ENCODE measurements at regions of chr16 and their contacts with region 1.

Region 1: DNA sequence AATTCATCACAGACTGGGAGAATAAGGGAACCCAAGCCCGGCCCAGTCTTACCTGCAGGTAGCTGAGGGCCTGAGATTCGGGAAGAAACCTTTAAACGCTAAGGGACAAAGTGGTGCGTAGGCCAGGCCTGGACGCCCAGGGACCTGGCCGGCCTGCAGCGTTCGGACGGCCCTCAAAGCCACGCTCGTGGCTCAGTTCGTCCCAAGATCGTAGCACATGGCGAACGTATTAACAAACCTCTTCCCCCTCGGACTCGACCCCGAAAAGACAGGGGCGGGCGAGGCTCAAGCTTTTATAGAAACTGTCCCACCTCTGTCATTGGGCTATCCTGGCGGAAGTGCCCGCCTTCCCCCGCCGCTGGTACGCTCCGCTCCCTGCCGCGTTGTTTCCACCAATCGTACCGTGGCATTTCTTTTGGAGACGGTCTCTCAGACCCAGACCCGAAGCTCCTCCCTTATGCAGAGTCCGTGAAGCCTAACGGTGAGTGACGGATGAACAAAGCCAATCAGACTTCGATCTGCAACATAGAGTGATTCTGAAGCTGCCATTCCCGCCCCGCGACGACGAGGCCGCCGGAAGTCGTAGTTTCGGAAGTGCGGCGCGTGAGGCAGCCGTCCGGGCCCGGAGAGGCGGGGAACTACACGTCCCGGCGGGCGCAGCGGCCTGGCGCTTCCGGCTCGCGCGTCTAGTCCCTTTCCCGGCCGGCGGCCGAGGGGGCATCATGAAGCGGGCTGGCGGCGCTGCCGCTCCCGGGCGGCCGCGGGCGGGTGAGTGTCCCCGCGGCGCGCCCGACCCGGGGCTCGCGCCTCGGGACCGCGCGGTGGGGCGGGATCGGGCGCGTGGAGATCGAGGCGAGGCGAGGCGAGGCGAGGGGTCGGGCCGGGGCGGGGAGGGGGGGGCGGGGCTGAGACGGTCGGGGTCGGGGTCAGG is at the start of gene TRAF7:
- DNase-seq: peak; percentile 97 to 100 (median 99)
- H3K4me3 ChIP-seq: peak within 1 kb of the TSS; percentile 75 to 79
- H3K4me3 Mint-ChIP-seq: peak within 1 kb of the TSS; percentile 94 to 98 (median 95)
- H3K27ac ChIP-seq: peak within 1 kb of the TSS; percentile 83
- H3K27ac Mint-ChIP-seq: peak within 1 kb of the TSS; percentile 75 to 98 (median 94)
- H3K4me1 ChIP-seq: peaks cover 70% of the 10 kb centered on the region
- H3K4me1 Mint-ChIP-seq: peaks cover 30 to 63% (median 45%) of the 10 kb centered on the region in 4 donors
- H3K27me3 ChIP-seq: no peaks in the 10 kb centered on the region
- H3K27me3 Mint-ChIP-seq: no peaks in the 10 kb centered on the region
- total RNA-seq, gene TRAF7: 40.9 to 41.9 TPM

Region 2: DNA sequence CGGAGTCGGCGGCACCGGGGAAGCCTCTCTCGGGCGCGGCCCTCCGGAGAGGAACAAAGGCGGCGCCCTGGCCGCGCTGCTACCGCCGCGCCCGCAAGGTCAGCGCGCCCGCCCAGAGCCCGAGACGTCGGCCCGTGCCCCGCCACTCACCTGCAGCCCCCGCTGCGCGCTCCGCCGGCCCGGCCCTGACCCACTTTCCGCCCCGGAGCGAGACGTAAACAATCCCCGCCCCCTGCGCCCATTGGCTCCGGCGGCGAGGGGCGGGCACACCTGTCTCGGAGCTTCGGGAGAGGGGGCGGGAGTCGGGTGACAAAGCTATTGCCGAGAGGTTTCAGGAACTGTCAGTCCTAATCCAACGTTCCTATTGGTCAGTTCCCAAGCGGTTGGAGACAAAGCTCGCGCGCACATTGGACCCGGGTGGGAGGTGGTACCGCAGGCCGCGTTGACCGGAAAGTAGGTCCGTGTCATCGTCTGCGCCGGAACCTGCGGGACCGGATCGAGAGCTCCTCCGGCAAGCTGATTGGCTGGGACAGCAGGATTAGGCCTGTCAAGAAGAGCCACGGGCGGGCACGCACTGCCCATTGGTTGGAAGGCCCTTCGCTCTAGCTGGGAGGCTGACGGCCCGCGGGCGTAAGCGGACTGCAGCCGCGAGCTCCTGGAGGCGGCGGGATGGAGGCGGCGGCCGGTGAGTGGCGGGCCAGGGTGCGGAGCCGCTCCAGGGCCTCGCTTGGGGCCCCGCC is 372.8 kb before region 1 on chr16 and contains the starts of genes NUBP2 and SPSB3:
- CTCF ChIA-PET with region 1: no interaction called
- POLR2A ChIA-PET with region 1: interaction called, 18 read pairs
- intact Hi-C with region 1: no loop called
- DNase-seq: peak; percentile 97 to 99 (median 99)
- H3K4me3 ChIP-seq: peak within 1 kb of the TSS; percentile 69 to 88
- H3K4me3 Mint-ChIP-seq: peak within 1 kb of the TSS; percentile 91 to 96 (median 94)
- H3K27ac ChIP-seq: peak within 1 kb of the TSS; percentile 79
- H3K27ac Mint-ChIP-seq: peak within 1 kb of the TSS; percentile 92 to 97 (median 94)
- H3K4me1 ChIP-seq: peaks cover 43% of the 10 kb centered on the region
- H3K4me1 Mint-ChIP-seq: peaks cover 13 to 46% (median 30%) of the 10 kb centered on the region in 4 donors
- H3K27me3 ChIP-seq: no peaks in the 10 kb centered on the region
- H3K27me3 Mint-ChIP-seq: no peaks in the 10 kb centered on the region
- total RNA-seq, gene NUBP2: 55.9 to 59.4 TPM
- total RNA-seq, gene SPSB3: 133 to 144 TPM

Region 3: GRCh38 chr16:1959269-1960049 is 195.9 kb before region 1 on chr16 and contains the start of gene NDUFB10:
- CTCF ChIA-PET with region 1: interaction called, 3 read pairs
- POLR2A ChIA-PET with region 1: interaction called, 75 read pairs
- intact Hi-C with region 1: loop called (anchors 1 kb)
- DNase-seq: peak; percentile 84 to 90 (median 87)
- H3K4me3 ChIP-seq: peak within 1 kb of the TSS; percentile 69 to 89
- H3K4me3 Mint-ChIP-seq: peak within 1 kb of the TSS; percentile 88 to 94 (median 92)
- H3K27ac ChIP-seq: peak within 1 kb of the TSS; percentile 78
- H3K27ac Mint-ChIP-seq: peak within 1 kb of the TSS; percentile 86 to 99 (median 95)
- H3K4me1 ChIP-seq: peaks cover 47% of the 10 kb centered on the region
- H3K4me1 Mint-ChIP-seq: peaks cover 26 to 53% (median 40%) of the 10 kb centered on the region in 4 donors
- H3K27me3 ChIP-seq: no peaks in the 10 kb centered on the region
- H3K27me3 Mint-ChIP-seq: no peaks in the 10 kb centered on the region
- total RNA-seq, gene NDUFB10: 76.5 to 86.2 TPM

Region 4: DNA sequence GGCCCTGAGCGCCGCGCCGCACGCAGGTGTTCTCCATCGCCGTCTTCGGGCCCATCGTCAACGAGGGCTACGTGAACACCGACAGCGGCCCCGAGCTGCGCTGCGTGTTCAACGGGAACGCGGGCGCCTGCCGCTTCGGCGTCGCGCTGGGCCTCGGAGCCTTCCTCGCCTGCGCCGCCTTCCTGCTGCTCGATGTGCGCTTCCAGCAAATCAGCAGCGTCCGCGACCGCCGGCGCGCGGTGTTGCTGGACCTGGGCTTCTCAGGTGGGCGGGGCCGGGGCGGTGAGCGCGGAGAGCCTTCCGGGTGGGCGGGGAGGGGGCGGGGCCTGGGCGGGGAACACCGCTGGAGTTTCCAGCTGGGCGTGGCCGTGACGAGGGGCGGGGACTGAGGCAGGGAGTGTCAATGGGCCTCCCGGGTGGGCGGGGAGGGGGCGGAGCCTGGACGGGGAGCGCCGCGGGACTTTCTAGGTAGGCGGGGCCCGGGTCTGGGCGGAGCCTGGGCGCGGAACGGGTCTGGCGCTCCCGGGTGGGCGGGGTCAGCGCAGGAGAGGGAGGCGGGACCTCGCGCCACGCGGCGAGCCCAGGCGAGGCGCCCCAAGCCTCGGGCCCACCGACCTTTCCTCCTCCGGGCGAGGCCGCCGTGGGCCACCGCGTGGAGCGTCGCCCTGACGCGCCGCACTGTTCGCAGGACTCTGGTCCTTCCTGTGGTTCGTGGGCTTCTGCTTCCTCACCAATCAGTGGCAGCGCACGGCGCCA is 163.2 kb before region 1 on chr16:
- CTCF ChIA-PET with region 1: interaction called, 3 read pairs
- POLR2A ChIA-PET with region 1: interaction called, 40 read pairs
- intact Hi-C with region 1: no loop called
- DNase-seq: peak; percentile 92 to 99 (median 93)
- H3K4me3 ChIP-seq: peak overlapping the region in 1 of 2 donors; percentile 42
- H3K4me3 Mint-ChIP-seq: peak overlapping the region in 7 of 8 donors; percentile 40 to 84 (median 73)
- H3K27ac ChIP-seq: peak overlapping the region; percentile 61
- H3K27ac Mint-ChIP-seq: peak overlapping the region in 6 of 7 donors; percentile 62 to 88 (median 78)
- H3K4me1 ChIP-seq: peaks cover 22% of the 10 kb centered on the region
- H3K4me1 Mint-ChIP-seq: peaks cover 6 to 30% (median 16%) of the 10 kb centered on the region in 4 donors
- H3K27me3 ChIP-seq: no peaks in the 10 kb centered on the region
- H3K27me3 Mint-ChIP-seq: peaks cover 6 to 7% of the 10 kb centered on the region in 2 donors

Region 5: DNA sequence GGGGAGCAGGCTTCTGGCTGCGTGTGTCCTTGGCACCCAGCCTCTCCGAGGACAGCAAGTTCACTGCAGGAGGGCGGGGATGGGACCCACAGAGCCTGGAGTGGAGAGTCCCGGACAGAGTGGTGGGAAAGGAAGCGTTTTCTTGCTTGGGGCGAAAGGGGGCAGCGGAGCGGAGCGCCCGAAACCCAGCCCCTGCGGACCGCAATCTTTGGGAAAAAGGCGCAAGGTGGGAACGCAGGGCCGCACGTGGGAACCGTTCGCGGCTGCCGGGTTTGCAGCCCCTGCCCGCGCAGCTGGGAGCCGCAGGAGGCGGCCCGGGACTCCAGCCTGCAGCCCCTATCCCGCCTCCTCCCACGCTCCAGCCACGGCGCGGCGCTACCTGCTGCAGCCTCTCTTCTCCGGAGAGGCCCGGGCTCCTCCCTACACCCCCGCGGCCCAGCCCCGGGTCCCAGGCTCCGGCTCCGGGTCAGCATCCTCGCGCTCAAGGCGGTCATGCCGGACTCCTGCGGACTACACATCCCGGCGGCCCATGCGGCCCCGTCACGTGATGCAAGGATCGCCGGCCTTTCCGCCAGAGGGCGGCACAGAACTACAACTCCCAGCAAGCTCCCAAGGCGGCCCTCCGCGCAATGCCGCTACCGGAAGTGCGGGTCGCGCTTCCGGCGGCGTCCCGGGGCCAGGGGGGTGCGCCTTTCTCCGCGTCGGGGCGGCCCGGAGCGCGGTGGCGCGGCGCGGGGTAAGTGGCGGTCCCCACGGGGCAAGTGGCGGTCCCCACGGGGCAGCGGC is 107.8 kb before region 1 on chr16 and contains the starts of genes NTHL1 and TSC2:
- CTCF ChIA-PET with region 1: interaction called, 4 read pairs
- POLR2A ChIA-PET with region 1: interaction called, 38 read pairs
- intact Hi-C with region 1: loop called (anchors 1 kb)
- DNase-seq: peak; percentile 88 to 91 (median 89)
- H3K4me3 ChIP-seq: peak within 1 kb of the TSS; percentile 81 to 82
- H3K4me3 Mint-ChIP-seq: peak within 1 kb of the TSS; percentile 91 to 96 (median 93)
- H3K27ac ChIP-seq: peak within 1 kb of the TSS; percentile 73
- H3K27ac Mint-ChIP-seq: peak within 1 kb of the TSS; percentile 42 to 91 (median 85)
- H3K4me1 ChIP-seq: peaks cover 24% of the 10 kb centered on the region
- H3K4me1 Mint-ChIP-seq: peaks cover 11 to 27% (median 17%) of the 10 kb centered on the region in 4 donors
- H3K27me3 ChIP-seq: no peaks in the 10 kb centered on the region
- H3K27me3 Mint-ChIP-seq: no peaks in the 10 kb centered on the region
- total RNA-seq, gene NTHL1: 9.3 to 12.0 TPM
- total RNA-seq, gene TSC2: 157 to 177 TPM

Region 6: GRCh38 chr16:2223375-2224182 is 68.2 kb after region 1 on chr16 and contains the start of gene E4F1:
- CTCF ChIA-PET with region 1: no interaction called
- POLR2A ChIA-PET with region 1: interaction called, 4 read pairs
- intact Hi-C with region 1: loop called (anchors 1 kb)
- DNase-seq: peak; percentile 97 to 99 (median 99)
- H3K4me3 ChIP-seq: peak within 1 kb of the TSS; percentile 81 to 84
- H3K4me3 Mint-ChIP-seq: peak within 1 kb of the TSS; percentile 85 to 93 (median 90)
- H3K27ac ChIP-seq: peak within 1 kb of the TSS; percentile 90
- H3K27ac Mint-ChIP-seq: peak within 1 kb of the TSS; percentile 82 to 94 (median 89)
- H3K4me1 ChIP-seq: peaks cover 14% of the 10 kb centered on the region
- H3K4me1 Mint-ChIP-seq: peaks cover 7 to 27% (median 19%) of the 10 kb centered on the region in 4 donors
- H3K27me3 ChIP-seq: no peaks in the 10 kb centered on the region
- H3K27me3 Mint-ChIP-seq: no peaks in the 10 kb centered on the region
- total RNA-seq, gene E4F1: 46.5 to 49.7 TPM

Region 7: DNA sequence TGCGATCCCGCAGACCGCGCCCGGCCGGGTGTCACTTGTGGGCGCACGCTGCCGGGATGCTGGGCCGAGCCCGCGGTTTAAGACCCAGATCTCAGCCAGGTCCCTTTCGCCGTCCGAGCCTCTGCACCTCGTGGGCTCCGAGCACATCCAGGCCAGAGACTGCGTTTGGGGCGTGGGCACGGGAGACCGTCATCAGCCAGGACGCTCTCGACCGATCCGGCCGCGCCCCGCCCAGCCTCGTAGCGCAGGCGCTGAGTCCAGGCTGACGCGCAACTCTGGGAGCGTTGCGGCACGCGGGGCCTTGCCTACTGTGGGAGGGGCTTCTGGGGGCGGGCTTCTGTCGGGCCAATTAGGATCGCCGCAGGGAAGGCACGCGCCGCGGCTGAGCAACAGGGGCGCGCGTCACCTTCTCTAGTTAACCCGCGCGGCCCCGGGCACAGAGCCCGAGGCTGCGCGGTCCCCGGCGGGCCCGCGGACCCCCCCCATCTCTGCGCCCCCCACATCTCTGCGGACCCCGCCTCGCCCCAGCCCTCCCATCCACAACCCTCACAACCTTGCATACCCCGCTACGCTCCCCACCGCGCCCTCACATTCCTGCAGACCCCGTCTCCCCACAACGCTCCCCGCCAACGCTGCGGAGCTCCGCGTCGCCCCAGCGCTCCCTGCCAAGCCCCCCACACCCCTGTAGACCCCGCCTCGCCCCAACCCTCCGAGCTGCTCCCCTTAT is 376.6 kb after region 1 on chr16:
- CTCF ChIA-PET with region 1: interaction called, 3 read pairs
- POLR2A ChIA-PET with region 1: interaction called, 11 read pairs
- intact Hi-C with region 1: no loop called
- DNase-seq: peak; percentile 95 to 98 (median 96)
- H3K4me3 ChIP-seq: peak overlapping the region; percentile 67 to 95
- H3K4me3 Mint-ChIP-seq: peak overlapping the region; percentile 91 to 98 (median 96)
- H3K27ac ChIP-seq: peak overlapping the region; percentile 91
- H3K27ac Mint-ChIP-seq: peak overlapping the region; percentile 98 to 100 (median 99)
- H3K4me1 ChIP-seq: peaks cover 14% of the 10 kb centered on the region
- H3K4me1 Mint-ChIP-seq: peaks cover 4 to 35% (median 21%) of the 10 kb centered on the region in 4 donors
- H3K27me3 ChIP-seq: no peaks in the 10 kb centered on the region
- H3K27me3 Mint-ChIP-seq: peaks cover 0 to 2% of the 10 kb centered on the region in 2 donors